AG04449 (cell line): ENCODE measurements at regions of chr17 and their contacts with region 1.

Region 1: DNA sequence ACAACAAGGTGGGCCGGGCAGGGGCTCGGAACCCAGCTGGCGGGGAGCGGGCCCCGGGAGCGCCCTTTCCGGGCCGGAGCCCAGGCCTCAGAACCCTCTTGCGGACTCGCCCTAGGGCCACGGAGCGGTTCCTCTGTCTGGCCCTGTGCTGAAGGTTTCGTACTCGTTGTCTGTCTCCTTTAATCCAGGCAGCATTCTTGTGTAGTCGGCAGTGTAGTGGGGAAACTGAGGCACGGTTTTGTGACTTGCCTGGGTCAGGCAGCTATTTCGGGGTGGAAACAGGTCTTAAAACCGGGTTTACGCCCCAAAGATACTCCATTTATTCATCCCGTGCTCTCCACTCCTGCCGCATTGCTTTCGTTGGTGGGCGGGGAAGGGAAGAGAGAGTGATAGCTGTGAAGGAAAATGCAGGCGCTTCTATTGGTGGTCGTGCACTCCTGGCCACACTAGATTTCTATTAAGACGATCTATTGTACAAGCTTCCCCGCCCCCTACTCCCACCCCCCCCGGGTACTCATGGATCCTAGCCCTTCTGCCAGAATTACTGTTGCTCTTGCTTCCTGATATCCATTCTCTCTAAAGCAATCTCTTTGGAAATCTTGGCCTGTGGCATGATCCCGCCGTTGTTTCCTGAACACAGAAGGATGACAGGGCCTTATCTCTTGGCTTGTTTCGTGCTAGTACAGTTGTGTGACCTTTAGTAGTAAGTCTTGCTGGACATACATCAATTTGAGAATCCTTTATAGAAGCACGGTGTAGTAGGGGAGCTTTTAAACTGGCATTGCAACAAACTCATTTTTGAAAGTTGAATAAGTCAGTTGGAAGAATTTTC is 747 bp downstream of the DCAF7 start:
- DNase-seq: no peak
- H3K4me3 ChIP-seq: peak overlapping the region; percentile 85
- CTCF ChIP-seq: no peak

Region 2: DNA sequence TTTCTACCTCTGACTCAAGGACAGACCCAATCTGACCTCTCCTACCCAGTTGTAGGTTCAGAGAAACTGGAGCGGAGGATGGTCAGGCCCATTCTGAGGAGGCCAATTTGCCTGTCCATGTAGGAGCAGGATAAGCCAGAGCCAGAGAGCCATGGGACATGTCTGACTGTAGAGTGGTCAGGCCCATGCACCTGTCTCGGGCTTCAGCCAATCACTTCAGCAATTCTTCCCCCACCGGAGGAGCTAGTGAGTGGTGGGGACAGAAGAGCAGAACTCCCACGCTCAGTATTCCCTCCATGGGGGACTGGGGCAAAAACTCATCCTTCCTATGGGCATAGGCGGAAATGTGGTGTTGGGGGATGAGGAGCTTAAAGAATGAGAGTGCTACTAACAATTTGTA is 13.5 kb after region 1 on chr17:
- CTCF ChIA-PET with region 1: interaction called, 11 read pairs
- POLR2A ChIA-PET with region 1: interaction called, 3 read pairs
- DNase-seq: no peak
- H3K4me3 ChIP-seq: no peak overlapping the region
- CTCF ChIP-seq: no peak